A549 (cell line): ENCODE measurements at regions of chr16 and their contacts with region 1.

Region 1: GRCh38 chr16:67816240-67817031 is 9.7 kb downstream of the TSNAXIP1 start:
- DNase-seq: peak; percentile 79 to 80
- ATAC-seq: peak; percentile 93 to 94
- H3K4me3 ChIP-seq: no peak overlapping the region
- H3K27ac ChIP-seq: no peak overlapping the region
- H3K4me1 ChIP-seq: no peaks in the 10 kb centered on the region
- CTCF ChIP-seq: peak; percentile 100
- EP300 ChIP-seq: no peak
- POLR2A ChIP-seq: no peak
- RAD21 ChIP-seq: peak; percentile 82 to 84

Region 2: GRCh38 chr16:67632415-67633172 is 183.8 kb before region 1 on chr16:
- CTCF ChIA-PET with region 1: no interaction called
- POLR2A ChIA-PET with region 1: no interaction called
- DNase-seq: no peak
- ATAC-seq: no peak
- H3K4me3 ChIP-seq: no peak overlapping the region
- H3K27ac ChIP-seq: no peak overlapping the region
- H3K4me1 ChIP-seq: no peaks in the 10 kb centered on the region
- CTCF ChIP-seq: no peak
- EP300 ChIP-seq: no peak
- POLR2A ChIP-seq: no peak
- RAD21 ChIP-seq: no peak

Region 3: DNA sequence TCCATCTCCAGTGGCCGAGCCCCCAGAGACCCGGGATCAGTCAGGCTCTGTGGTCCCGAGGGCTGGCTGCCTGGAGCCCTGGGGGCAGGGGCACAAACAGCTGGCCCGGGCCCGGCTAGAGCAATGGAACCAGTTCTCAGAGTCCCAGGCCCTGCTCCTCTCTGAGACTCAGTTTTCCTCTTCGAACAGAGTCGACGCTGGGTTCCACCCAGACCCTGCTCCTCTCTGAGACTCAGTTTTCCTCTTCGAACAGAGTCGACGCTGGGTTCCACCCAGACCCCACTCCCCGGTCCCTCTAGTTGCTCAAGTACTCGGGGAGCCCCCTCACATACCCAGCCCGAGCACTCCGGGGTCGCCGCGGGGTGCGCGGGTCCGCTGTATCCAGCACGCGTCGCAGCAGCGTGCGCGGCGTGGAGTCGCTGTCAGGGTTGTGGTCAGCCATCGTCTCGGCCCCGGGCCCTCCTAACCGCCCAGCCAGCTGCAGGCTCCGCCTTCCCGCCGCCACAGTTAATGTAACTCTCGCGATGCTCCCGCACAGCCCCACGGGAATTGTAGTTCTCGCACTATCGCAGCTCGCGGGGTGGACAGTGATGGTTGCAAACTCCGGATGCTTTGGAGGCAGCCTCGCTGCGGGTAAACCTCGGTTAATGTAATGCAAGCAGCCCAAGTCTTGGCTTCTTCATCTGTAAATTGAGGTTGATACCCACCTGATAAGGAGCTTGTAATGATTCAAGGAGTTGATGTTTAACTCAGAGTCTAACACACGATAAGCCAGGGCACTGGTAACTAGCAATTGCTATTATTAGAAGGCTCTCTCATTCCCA is 17.2 kb after region 1 on chr16:
- CTCF ChIA-PET with region 1: interaction called, 187 read pairs
- POLR2A ChIA-PET with region 1: interaction called, 3 read pairs
- DNase-seq: peak; percentile 86 to 97
- ATAC-seq: peak; percentile 99
- H3K4me3 ChIP-seq: peak overlapping the region; percentile 79
- H3K27ac ChIP-seq: peak overlapping the region; percentile 79 to 91
- H3K4me1 ChIP-seq: peaks cover 6% of the 10 kb centered on the region; the same call in 1 of the 3 replicates
- CTCF ChIP-seq: no peak
- EP300 ChIP-seq: no peak
- POLR2A ChIP-seq: peak; percentile 76
- RAD21 ChIP-seq: no peak

Region 4: GRCh38 chr16:67865316-67865715 is 48.9 kb after region 1 on chr16:
- CTCF ChIA-PET with region 1: interaction called, 65 read pairs
- POLR2A ChIA-PET with region 1: no interaction called
- DNase-seq: peak; percentile 69 to 72
- ATAC-seq: peak; percentile 84 to 88
- H3K4me3 ChIP-seq: no peak overlapping the region
- H3K27ac ChIP-seq: no peak overlapping the region
- H3K4me1 ChIP-seq: peaks cover 36% of the 10 kb centered on the region
- CTCF ChIP-seq: peak; percentile 36
- EP300 ChIP-seq: no peak
- POLR2A ChIP-seq: no peak
- RAD21 ChIP-seq: peak; percentile 43 to 65; a peak in 4 of 5 replicates

Region 5: GRCh38 chr16:67910158-67910557 is 93.7 kb after region 1 on chr16:
- CTCF ChIA-PET with region 1: interaction called, 49 read pairs
- POLR2A ChIA-PET with region 1: no interaction called
- DNase-seq: no peak
- ATAC-seq: 0 out of 6 replicates have a peak, but pooled peaks of 1 of the 2 experiments have one; percentile 24
- H3K4me3 ChIP-seq: no peak overlapping the region
- H3K27ac ChIP-seq: no peak overlapping the region
- H3K4me1 ChIP-seq: no peaks in the 10 kb centered on the region
- CTCF ChIP-seq: no peak
- EP300 ChIP-seq: no peak
- POLR2A ChIP-seq: no peak
- RAD21 ChIP-seq: no peak

Region 6: DNA sequence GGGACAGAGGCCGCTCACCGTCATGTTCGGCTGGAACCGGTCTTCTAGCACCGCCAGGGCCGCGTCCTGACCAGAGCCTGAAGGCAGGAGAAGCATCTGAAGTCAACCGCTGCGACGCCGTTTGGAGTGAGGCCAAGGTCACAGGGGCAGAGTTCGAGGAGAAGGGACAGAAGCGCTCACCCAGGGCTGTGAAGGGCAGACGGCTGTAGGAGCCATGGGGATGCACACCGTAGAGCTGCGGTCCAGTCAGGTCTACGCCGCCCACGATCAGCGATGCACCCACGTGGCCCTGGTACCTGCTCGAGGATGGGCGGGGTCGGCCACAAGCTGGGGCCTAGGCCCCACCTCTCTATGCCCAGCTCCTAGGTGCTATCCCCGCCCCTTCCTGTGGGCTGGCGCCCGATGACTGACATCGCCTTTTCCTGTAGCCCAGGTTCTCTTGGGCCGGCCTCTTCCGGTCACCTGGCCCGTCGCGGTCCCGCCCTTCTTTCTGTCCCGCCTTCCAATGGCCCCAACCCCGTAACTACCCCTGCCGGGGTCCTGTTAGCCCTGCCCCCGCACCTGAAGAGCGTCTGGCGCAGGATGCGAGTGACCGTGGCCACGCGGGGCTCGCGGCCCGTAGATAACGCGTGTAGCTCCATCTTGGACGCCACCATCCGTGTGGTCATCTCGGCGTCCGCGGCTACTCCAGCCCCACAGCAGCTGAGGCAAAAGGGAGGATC is 119.1 kb after region 1 on chr16:
- CTCF ChIA-PET with region 1: interaction called, 26 read pairs
- POLR2A ChIA-PET with region 1: interaction called, 3 read pairs
- DNase-seq: peak; percentile 95 to 100
- ATAC-seq: peak; percentile 85 to 95
- H3K4me3 ChIP-seq: peak overlapping the region; percentile 76
- H3K27ac ChIP-seq: peak overlapping the region; percentile 88 to 96
- H3K4me1 ChIP-seq: peaks cover 16% of the 10 kb centered on the region; the same call in 2 of the 3 replicates
- CTCF ChIP-seq: no peak
- EP300 ChIP-seq: no peak
- POLR2A ChIP-seq: peak; percentile 80
- RAD21 ChIP-seq: no peak